Activated T-helper 1 cell treated with anti-CD3 and anti-CD28 coated beads, Interleukin-12 subunit alpha, Interleukin-12 subunit beta, Interleukin-2, Interleukin-4 antibody, amounts not matched to agents 30 ng/mL and 10 ng/mL and 1 ng/mL, durations not matched to agents 14 hours and 24 hours and 36 hours (primary cell): ENCODE measurements at regions of chr16 and their contacts with region 1.

Region 1: DNA sequence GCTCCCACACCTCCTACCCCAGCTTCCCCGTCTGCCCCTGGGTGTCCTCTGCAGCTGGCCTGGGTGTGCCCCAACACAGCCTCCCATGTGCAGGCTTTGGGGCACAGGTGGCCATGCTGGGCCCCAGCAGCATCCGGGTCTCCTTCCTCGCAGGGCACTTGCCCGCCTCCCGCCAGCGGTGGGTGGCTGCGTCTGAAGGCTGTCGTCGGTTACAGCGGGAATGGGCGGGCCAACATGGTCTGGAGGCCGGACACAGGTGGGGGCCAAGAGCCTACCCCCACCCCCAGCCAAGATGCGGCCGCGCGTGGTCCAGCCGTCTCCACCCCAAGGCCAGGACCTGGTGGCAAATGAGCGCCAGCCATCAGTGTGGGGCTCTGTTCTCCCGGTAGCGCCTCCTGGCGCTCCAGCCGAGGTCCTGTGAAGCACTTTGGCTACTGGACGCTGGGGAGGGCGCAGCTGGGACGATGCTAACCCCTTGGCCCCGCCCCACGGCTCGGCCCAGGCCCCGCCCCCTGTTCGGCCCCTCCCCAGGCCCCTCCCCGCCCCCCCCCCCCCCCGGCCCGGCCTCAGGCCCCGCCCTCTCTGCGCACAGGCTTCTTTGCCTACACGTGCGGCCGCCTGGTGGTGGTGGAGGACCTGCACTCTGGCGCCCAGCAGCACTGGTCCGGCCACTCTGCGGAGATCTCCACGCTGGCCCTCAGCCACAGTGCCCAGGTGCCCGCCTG is 7.3 kb upstream of the RHOT2 start:
- DNase-seq: peak; percentile 53
- H3K4me3 Mint-ChIP-seq: peak overlapping the region; percentile 5
- H3K27ac Mint-ChIP-seq: no peak overlapping the region
- H3K4me1 Mint-ChIP-seq: no peaks in the 10 kb centered on the region
- H3K27me3 Mint-ChIP-seq: no peaks in the 10 kb centered on the region

Region 2: DNA sequence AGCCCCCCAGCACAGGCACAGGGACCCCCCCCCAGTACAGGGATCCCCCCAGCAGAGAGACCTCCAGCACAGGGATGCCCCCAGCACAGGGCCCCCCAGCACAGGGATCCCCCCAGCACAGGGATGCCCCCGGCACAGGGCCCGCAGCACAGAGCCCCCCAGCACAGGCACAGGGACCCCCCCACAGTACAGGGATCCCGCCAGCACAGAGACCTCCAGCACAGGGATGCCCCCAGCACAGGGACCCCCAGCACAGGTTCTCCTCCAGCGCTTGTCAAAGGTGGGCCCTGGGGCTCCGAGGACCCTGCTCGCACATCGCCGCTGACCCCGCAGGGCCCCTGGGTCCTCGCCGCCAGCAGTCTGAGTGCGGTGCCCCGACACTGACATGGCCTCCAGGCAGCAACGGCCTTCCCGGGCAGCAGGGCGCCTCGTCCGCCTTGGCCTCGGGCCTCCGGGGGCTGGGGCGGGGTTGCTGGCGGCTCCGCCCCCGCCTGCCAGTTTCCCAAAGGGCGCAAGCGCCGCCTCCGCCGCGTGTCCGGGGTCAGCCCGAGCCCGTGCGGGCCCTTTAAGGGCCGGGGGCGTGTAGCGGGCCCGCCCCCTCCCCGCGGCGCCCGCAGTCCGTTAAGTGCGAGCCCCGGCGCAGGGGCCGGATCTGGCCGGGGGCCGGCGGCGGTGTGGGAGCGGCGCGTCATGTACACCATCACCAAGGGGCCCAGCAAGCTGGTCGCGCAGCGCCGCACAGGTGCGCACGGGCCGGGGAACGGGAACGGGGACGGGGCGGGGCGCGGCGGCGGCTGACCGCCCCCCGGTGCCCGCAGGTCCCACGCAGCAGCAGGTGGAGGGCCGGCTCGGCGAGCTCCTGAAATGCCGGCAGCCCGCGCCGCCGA is 19.1 kb before region 1 on chr16 and contains the start of gene MCRIP2:
- intact Hi-C with region 1: loop called (anchors 1 kb)
- DNase-seq: peak; percentile 80
- H3K4me3 Mint-ChIP-seq: peak within 1 kb of the TSS; percentile 76
- H3K27ac Mint-ChIP-seq: no peak within 1 kb of the TSS
- H3K4me1 Mint-ChIP-seq: peaks cover 3% of the 10 kb centered on the region
- H3K27me3 Mint-ChIP-seq: no peaks in the 10 kb centered on the region
- total RNA-seq, gene MCRIP2: 66.5 and 67.6 TPM in 2 replicates

Region 3: DNA sequence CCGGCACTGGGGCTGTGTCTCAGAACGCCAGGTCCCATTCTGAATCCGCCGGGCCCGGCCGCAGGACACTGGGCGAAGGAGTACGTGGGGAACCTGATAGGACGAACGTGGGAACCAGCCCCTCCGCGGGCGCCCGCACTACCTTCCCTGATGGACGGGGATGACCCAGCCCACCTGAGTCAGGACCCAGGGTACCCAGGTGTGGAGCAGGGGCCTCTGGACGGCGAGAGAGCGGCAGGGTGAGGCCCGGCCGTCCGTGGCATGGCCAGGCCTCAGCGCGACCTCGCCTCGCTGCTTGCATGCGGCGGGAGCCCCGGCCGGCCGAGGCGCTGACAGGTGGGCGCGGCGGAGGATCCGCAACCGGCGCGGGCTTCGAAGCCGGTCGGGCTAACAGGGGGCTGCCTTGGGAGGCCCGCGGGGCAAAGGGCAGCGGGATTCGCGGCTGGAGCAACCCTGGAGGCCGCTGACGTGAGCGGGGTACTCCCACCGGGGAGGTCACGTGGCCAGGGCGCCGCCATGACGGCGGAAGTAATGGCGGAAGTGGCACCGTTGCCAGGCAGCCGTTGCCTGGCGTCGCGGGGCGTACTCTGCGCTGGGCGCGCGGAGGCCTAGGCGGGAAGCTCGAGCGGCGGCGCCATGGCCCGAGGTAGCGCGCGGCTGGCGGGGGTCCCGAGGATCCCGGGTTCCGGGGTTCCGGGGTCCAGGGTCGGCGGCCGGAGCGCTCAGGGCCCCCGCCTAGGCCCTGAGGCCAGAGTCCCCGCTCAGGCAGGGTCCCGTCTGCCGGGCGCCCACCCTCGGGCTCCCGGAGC is 11.6 kb before region 1 on chr16 and contains the start of gene WDR90:
- intact Hi-C with region 1: loop called (anchors 1 kb)
- DNase-seq: peak; percentile 92
- H3K4me3 Mint-ChIP-seq: peak within 1 kb of the TSS; percentile 84
- H3K27ac Mint-ChIP-seq: peak within 1 kb of the TSS; percentile 68
- H3K4me1 Mint-ChIP-seq: no peaks in the 10 kb centered on the region
- H3K27me3 Mint-ChIP-seq: no peaks in the 10 kb centered on the region
- total RNA-seq, gene WDR90: 81.2 and 82.3 TPM in 2 replicates

Region 4: DNA sequence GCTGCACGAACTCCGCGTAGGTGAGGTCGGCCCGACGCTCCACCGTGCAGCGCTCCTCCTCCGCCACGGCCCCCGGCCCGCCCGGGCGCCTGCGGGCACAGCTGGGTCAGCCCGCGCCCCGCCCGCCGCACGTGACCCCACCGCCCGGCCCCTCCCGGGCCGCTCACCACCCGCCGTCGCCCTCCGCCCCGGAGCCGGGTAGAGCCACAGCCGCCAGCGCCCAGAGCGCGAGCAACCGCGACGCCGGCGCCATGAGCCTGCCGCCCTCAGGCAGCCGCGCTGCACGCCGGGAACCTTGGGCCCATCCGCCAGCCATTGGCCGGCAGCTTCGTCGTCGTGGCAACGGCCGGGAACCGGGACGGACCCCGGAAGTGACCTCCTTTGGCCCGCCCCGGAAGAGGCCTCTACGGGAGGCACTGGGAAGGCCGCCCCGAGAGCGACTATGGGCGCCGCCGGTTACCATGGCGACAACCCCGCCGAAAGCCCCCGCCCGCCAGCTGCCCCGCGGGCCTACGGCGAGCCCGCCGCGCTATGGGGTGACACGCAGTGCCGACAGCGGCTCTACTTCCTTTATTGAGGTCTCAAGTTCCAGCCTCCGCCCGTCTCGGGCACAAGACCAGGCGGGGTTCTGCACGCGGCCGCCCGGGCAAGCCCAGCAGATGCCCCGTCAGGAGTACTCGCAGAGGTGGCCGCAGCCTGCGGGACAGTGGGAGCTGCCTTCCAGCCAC is 23.6 kb after region 1 on chr16 and contains the start of gene JMJD8:
- intact Hi-C with region 1: loop called (anchors 1 kb)
- DNase-seq: peak; percentile 97
- H3K4me3 Mint-ChIP-seq: peak within 1 kb of the TSS; percentile 83
- H3K27ac Mint-ChIP-seq: peak within 1 kb of the TSS; percentile 58
- H3K4me1 Mint-ChIP-seq: peaks cover 5% of the 10 kb centered on the region
- H3K27me3 Mint-ChIP-seq: no peaks in the 10 kb centered on the region
- total RNA-seq, gene JMJD8: 63.4 and 71.4 TPM in 2 replicates